AG04450 (cell line): ENCODE measurements at regions of chr17 and their contacts with region 1.

Region 1: DNA sequence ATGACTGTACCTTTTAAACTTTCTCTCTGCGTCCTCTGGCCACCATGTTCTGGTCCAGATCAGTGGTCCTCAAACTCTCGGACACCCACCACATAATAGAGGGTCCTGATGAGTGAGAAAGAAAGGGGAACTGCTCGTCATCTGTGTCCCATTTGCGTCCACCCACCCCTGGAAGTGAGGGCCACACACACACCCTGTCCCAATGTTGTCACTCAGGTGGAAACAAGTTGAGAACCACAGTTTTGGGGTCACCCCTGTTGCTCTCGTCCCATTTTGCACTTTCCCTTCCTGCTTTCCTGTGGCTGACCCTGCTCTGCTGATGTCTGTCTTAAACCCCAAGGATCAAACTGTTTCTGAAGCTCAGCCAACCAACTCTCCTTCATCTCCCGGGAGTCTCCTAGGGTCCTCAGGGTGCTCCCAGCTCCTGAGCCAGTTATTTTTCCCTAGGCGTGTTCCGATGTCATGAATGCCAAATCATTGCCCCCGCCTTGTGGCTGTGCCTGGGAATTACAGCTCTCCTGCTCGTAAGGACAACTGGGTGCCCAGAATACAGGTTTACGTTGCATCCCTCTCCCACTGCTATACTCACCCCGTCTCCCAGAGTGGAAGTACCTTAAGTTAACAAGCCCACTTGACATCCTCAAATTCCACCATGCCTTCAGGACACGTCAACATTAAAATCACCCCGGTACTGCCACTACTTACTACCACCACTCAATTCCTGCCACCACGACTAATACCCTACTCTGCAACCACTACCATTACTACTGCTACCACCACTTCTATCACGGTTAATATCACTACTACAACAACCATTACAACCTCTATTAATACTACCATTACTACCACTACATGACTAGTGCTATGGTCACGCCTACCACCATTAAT is 26.0 kb upstream of the HNF1B start:
- DNase-seq: no peak
- H3K4me3 ChIP-seq: no peak overlapping the region
- H3K27ac ChIP-seq: no peak overlapping the region
- H3K27me3 ChIP-seq: peaks cover 4% of the 10 kb centered on the region
- CTCF ChIP-seq: peak; percentile 87

Region 2: GRCh38 chr17:37643118-37643766 is 127.6 kb before region 1 on chr17 and contains the start of gene DDX52:
- CTCF ChIA-PET with region 1: interaction called, 58 read pairs
- POLR2A ChIA-PET with region 1: no interaction called
- DNase-seq: peak; percentile 63
- H3K4me3 ChIP-seq: peak within 1 kb of the TSS; percentile 94
- H3K27ac ChIP-seq: peak within 1 kb of the TSS; percentile 58
- H3K27me3 ChIP-seq: no peaks in the 10 kb centered on the region
- CTCF ChIP-seq: no peak
- polyA plus RNA-seq, gene DDX52: 24.2 and 31.8 TPM in 2 replicates

Region 3: DNA sequence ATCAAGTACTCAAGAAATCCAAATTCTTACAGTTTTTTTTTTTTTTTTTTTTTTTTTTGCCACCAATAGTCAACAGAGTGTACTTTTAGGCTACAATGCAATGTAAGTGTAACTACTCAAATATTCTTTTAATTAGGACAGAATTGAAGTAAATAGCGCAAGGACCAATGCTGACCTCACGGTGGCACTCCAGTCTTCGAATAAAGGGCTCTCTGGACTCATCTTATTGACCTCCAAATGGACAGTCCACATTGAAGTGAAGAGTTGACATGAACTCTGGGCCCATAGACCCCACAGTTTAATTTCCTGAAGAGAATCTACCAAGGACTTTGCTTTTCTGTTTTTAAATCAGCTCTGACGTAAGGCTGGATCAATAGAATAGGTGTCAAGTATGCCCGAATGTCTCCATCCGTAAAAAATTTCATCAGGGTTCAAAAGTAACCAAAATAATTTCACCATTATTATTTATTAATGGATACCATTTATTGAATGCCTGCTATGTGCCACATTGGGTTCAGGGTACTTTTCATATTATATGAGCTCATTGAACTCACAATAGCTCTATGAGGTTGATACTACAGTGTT is 120.4 kb before region 1 on chr17:
- CTCF ChIA-PET with region 1: interaction called, 58 read pairs
- POLR2A ChIA-PET with region 1: no interaction called
- DNase-seq: no peak
- H3K4me3 ChIP-seq: no peak overlapping the region
- H3K27ac ChIP-seq: no peak overlapping the region
- H3K27me3 ChIP-seq: no peaks in the 10 kb centered on the region
- CTCF ChIP-seq: peak; percentile 52

Region 4: GRCh38 chr17:37791447-37792399 is 20.8 kb after region 1 on chr17:
- CTCF ChIA-PET with region 1: interaction called, 14 read pairs
- POLR2A ChIA-PET with region 1: no interaction called
- DNase-seq: no peak
- H3K4me3 ChIP-seq: no peak overlapping the region
- H3K27ac ChIP-seq: no peak overlapping the region
- H3K27me3 ChIP-seq: no peaks in the 10 kb centered on the region
- CTCF ChIP-seq: peak; percentile 50